ENCODE measurements at regions of chr2 and their contacts with region 1.

Region 1: DNA sequence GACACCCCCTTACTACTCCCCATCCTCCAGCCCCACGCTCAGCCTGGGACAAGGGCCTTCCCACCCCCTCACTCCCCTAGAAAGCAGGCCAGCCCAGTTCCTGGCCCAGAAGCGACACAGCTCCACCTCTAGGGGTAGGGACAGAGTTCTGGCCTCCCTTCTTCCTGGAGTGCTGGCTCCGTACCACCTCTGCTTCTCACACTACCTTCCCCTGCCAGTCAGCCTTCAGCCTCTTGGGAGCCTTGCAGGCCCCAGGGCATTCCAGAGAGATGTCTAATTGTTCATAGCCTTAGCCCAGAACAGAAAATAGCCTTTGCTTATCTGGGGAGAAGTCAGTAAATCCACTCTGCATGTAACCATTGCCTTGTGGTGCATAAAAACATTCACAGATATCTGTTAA is 13.1 kb upstream of the CATIP start:
- DNase-seq: no peak
- H3K4me3 ChIP-seq: no peak overlapping the region
- H3K27ac ChIP-seq: no peak overlapping the region
- H3K4me1 ChIP-seq: no peaks in the 10 kb centered on the region
- H3K27me3 ChIP-seq: no peaks in the 10 kb centered on the region

Region 2: GRCh38 chr2:218257390-218257981 is 86.1 kb before region 1 on chr2:
- CTCF ChIA-PET with region 1: no interaction called
- POLR2A ChIA-PET with region 1: no interaction called
- DNase-seq: peak; percentile 77 to 89 (median 87)
- H3K4me3 ChIP-seq: peak overlapping the region in 4 of 7 experiments; percentile 27 to 64 (median 49)
- H3K27ac ChIP-seq: peak overlapping the region in 1 of 2 experiments; percentile 38
- H3K4me1 ChIP-seq: peaks cover 0 to 21% (median 18%) of the 10 kb centered on the region in 4 experiments
- H3K27me3 ChIP-seq: no peaks in the 10 kb centered on the region

Region 3: GRCh38 chr2:218354045-218354444 is 10.5 kb after region 1 on chr2:
- CTCF ChIA-PET with region 1: interaction called, 212 read pairs
- POLR2A ChIA-PET with region 1: no interaction called
- DNase-seq: no peak
- H3K4me3 ChIP-seq: no peak overlapping the region
- H3K27ac ChIP-seq: no peak overlapping the region
- H3K4me1 ChIP-seq: peaks cover 0 to 5% (median 3%) of the 10 kb centered on the region in 4 experiments
- H3K27me3 ChIP-seq: no peaks in the 10 kb centered on the region

Measured in common myeloid progenitor, CD34-positive (primary cell).